CD8-positive, alpha-beta T cell (primary cell): ENCODE measurements at regions of chr5 and their contacts with region 1.

Region 1: DNA sequence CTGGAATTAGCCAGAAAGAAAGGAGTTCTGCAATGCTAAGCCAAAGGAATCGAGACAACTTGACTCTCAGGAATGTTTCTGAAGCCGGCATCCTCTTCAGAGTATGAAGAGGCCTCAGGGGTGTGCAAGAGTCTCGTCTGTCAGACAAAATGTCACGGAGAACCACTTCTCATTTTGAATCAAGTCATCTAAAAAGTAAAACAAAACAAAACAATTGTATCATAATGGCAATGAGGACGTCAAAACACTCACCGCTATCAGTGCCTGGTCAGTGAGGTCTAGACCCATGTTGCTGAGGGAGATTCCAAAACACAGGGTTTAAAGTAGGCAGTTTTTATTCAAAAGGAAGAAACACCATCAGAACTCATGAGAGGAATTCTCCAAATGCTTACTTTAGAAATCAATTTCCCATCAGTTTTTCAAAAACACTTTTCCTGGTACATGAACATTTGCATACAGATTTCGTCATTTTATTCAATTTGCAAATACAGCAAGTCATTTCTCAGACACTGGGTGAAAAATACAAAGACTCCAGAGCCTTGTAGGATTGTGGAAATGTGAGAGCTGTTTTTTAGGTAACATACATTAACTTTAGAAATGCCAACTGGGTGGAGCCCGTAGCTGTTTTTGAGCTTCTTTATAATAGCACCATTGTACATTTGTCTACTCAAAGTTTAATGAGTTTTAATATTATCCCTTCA is 89.5 kb upstream of the MAP3K1 start:
- DNase-seq: no peak
- ATAC-seq: no peak
- H3K4me3 ChIP-seq: no peak overlapping the region
- H3K4me3 Mint-ChIP-seq: no peak overlapping the region
- H3K27ac ChIP-seq: no peak overlapping the region
- H3K27ac Mint-ChIP-seq: no peak overlapping the region
- H3K4me1 ChIP-seq: no peaks in the 10 kb centered on the region
- H3K4me1 Mint-ChIP-seq: peaks cover 4% of the 10 kb centered on the region
- H3K27me3 ChIP-seq: no peaks in the 10 kb centered on the region
- H3K27me3 Mint-ChIP-seq: no peaks in the 10 kb centered on the region
- CTCF ChIP-seq: no peak

Region 2: DNA sequence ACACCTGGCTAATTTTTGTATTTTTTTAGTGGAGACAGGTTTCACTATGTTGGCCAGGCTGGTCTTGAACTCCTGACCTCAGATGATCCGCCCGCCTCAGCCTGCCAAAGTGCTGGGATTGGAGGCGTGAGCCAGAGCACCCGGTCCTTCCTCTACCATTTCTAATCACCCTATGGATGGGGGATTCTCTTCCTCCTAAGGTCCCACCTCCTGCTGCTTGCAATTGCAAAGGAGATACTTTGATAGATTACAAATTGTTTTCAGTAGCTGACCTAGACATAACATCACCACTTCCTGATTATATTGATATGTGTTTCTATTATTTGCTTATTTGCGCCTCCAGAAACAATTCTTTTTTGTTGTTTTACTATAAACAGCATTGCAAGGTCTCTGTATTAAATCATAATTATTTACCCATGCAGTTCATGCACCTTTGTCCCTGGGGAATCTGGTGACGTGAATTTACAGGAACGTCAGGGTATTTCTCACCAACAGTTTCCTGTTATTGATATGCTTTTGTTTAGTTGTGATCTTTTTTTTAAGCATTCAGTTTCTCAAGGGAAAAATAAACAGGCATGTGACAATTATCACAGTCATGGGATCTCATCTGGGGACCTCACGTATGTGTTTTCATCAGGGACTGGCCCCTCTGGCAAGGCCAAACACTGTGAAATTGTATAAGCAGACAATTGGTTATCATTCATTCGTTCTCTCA is 1783.6 kb before region 1 on chr5:
- CTCF ChIA-PET with region 1: no interaction called
- POLR2A ChIA-PET with region 1: no interaction called
- intact Hi-C with region 1: no loop called
- DNase-seq: no peak
- ATAC-seq: no peak
- H3K4me3 ChIP-seq: no peak overlapping the region
- H3K4me3 Mint-ChIP-seq: no peak overlapping the region
- H3K27ac ChIP-seq: no peak overlapping the region
- H3K27ac Mint-ChIP-seq: no peak overlapping the region
- H3K4me1 ChIP-seq: no peaks in the 10 kb centered on the region
- H3K4me1 Mint-ChIP-seq: no peaks in the 10 kb centered on the region
- H3K27me3 ChIP-seq: no peaks in the 10 kb centered on the region
- H3K27me3 Mint-ChIP-seq: no peaks in the 10 kb centered on the region
- CTCF ChIP-seq: no peak

Region 3: DNA sequence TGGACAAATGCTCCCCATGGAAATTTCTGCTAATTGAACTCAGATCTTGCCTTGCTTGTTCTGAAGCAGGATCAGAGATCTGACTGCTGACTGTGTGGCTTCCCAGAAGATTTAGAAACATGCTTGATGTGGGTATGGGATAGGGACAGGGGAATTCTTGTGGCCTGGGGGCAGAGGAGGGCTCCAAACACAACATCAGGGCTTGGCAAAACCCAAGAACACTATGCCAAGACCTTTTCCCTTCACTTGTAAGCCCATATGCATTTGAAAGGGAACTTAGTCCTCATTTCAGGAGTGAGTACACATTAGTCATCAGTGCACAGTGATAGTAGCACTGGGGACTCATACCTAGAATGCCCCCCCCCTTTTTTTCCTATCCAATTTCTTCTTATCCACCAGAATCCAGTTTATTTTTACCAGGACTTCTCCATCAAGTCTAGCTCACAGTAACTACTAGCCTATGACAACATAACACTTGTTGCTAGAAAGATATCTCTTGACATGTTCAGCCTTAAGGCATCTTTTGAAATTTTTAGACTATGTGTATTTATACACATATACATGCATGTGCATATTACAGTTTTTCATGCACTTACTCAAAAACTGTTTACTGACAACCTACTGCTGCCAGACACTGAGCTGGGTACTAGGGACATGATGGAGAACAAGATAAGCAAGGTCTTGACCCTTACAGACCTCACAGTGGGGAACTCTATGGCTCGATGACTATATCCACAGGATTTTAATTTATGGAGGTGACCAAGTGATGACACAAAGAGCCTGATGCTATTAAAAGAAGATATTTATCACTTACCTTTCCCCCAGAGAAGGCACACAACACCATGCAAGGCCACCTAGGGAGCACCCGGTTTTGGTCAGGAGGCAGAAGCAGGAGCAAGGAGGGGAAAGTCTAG is 68.8 kb before region 1 on chr5:
- CTCF ChIA-PET with region 1: no interaction called
- POLR2A ChIA-PET with region 1: no interaction called
- intact Hi-C with region 1: no loop called
- DNase-seq: no peak
- ATAC-seq: no peak
- H3K4me3 ChIP-seq: no peak overlapping the region
- H3K4me3 Mint-ChIP-seq: no peak overlapping the region
- H3K27ac ChIP-seq: no peak overlapping the region
- H3K27ac Mint-ChIP-seq: no peak overlapping the region
- H3K4me1 ChIP-seq: no peaks in the 10 kb centered on the region
- H3K4me1 Mint-ChIP-seq: no peaks in the 10 kb centered on the region
- H3K27me3 ChIP-seq: no peaks in the 10 kb centered on the region
- H3K27me3 Mint-ChIP-seq: no peaks in the 10 kb centered on the region
- CTCF ChIP-seq: no peak

Region 4: DNA sequence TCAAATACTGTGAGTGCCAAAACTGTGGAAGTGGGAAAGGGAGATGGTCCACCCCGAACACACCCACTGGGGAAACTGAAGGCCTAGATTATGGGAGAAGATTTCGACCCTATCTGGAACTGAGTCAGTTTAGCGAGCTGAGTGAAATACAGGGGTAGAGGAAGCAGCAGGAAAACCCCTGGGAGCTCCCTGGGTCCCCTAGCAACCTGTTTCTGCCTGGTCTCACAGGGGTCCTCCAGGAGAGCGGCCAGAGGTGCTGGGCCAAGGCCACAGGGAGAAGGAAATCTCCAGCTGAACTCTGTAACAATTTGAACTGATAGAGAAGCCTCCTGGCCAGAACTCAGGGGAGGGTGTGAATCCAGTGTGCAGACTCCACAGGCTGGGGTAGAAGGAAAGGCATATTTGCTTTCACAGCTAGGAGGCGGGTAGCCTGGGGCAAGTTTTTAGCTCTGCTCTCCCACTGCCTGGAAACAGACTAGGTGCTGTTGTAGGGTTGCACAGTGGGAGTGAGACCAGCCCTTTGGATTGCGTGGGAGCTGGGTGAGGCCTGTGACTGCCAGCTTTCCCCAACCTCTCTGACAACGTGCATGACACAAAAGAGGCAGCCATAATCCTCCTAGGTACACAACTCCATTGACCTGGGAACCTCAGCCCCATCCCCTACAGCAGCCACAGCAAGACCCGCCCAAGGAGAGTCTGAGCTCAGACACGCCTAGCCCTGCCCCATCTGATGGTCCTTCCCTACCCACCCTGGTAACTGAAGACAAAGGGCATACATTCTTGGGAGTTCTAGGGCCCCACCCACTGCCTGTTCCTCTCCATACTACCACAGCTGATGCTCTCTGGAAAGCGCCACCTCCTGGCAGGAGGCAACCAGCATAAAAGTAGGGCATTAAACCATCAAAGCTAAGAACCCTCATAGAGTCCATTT is 369.2 kb after region 1 on chr5:
- CTCF ChIA-PET with region 1: no interaction called
- POLR2A ChIA-PET with region 1: no interaction called
- intact Hi-C with region 1: loop called in 1 of 2 experiments (anchors 5 kb)
- DNase-seq: peak in 2 of 9 experiments; percentile 17 to 29
- ATAC-seq: no peak
- H3K4me3 ChIP-seq: no peak overlapping the region
- H3K4me3 Mint-ChIP-seq: no peak overlapping the region
- H3K27ac ChIP-seq: no peak overlapping the region
- H3K27ac Mint-ChIP-seq: no peak overlapping the region
- H3K4me1 ChIP-seq: no peaks in the 10 kb centered on the region
- H3K4me1 Mint-ChIP-seq: no peaks in the 10 kb centered on the region
- H3K27me3 ChIP-seq: no peaks in the 10 kb centered on the region
- H3K27me3 Mint-ChIP-seq: peaks cover 4% of the 10 kb centered on the region
- CTCF ChIP-seq: no peak